Aorta (tissue), 5 donors: ENCODE measurements at regions of chr21 and their contacts with region 1.

Region 1: GRCh38 chr21:16194095-16194787 is 464.5 kb downstream of the USP25 start:
- DNase-seq: peak in 1 of 2 donors; percentile 71
- ATAC-seq: peak; percentile 88
- H3K4me3 ChIP-seq: peak overlapping the region; percentile 47 to 77
- H3K27ac ChIP-seq: peak overlapping the region; percentile 9 to 73
- H3K4me1 ChIP-seq: no peaks in the 10 kb centered on the region
- H3K27me3 ChIP-seq: no peaks in the 10 kb centered on the region

Region 2: GRCh38 chr21:16159213-16159970 is 34.8 kb before region 1 on chr21:
- intact Hi-C with region 1: no loop called
- DNase-seq: no peak
- ATAC-seq: no peak
- H3K4me3 ChIP-seq: no peak overlapping the region
- H3K27ac ChIP-seq: no peak overlapping the region
- H3K4me1 ChIP-seq: no peaks in the 10 kb centered on the region
- H3K27me3 ChIP-seq: no peaks in the 10 kb centered on the region

Region 3: GRCh38 chr21:16323596-16323995 is 129.4 kb after region 1 on chr21:
- intact Hi-C with region 1: loop called in 1 of 2 experiments (anchors 10 kb)
- DNase-seq: no peak
- ATAC-seq: no peak
- H3K4me3 ChIP-seq: no peak overlapping the region
- H3K27ac ChIP-seq: no peak overlapping the region
- H3K4me1 ChIP-seq: peaks cover 0 to 1% of the 10 kb centered on the region in 2 donors
- H3K27me3 ChIP-seq: no peaks in the 10 kb centered on the region